Activated naive CD4-positive, alpha-beta T cell treated with anti-CD3 and anti-CD28 coated beads for 36 hours (primary cell): ENCODE measurements at regions of chr14 and their contacts with region 1.

Region 1: GRCh38 chr14:64387694-64388532 is at the start of gene MTHFD1:
- DNase-seq: peak; percentile 99
- H3K4me3 Mint-ChIP-seq: peak within 1 kb of the TSS; percentile 92
- H3K27ac Mint-ChIP-seq: peak within 1 kb of the TSS; percentile 94
- H3K4me1 Mint-ChIP-seq: peaks cover 26% of the 10 kb centered on the region
- H3K27me3 Mint-ChIP-seq: no peaks in the 10 kb centered on the region
- total RNA-seq, gene MTHFD1: 240 to 247 TPM

Region 2: DNA sequence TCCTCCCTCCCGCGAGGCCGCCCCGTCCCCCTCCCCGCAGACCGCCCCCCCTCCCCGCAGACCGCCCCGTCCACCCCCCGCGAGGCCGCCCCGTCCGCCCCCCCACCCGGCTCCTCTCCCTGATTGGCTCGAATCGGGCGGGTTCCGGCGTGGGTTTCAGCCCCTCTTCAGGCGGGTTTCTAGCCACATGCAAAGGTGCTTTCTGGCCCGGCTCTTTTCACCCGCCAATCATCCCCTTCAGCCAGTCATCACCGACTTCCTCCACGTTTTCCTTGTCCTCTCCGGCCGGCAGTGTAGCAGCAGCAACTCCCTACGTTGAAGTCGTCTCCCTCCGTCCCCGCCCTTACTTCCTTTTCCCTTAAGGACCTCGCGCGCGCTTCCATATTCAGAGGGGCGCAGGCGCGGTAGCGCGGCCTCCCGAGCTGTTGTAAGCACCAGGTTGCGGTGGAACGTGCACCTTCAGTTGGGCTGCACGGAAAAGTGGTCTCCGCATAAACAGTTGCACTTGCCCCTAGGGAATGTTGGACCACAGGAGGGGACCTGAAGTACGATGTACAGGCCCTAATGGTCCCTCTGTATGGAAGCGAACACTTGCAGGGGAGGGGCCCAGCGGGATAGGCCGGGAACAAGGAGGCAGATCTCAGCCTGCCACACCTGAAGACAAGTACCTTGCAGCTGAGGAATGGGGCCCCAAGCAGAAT is 49.1 kb before region 1 on chr14:
- CTCF ChIA-PET with region 1: interaction called, 3 read pairs
- intact Hi-C with region 1: loop called (anchors 1 kb)
- DNase-seq: peak; percentile 95
- H3K4me3 Mint-ChIP-seq: peak overlapping the region; percentile 92
- H3K27ac Mint-ChIP-seq: peak overlapping the region; percentile 86
- H3K4me1 Mint-ChIP-seq: peaks cover 19% of the 10 kb centered on the region
- H3K27me3 Mint-ChIP-seq: no peaks in the 10 kb centered on the region

Region 3: DNA sequence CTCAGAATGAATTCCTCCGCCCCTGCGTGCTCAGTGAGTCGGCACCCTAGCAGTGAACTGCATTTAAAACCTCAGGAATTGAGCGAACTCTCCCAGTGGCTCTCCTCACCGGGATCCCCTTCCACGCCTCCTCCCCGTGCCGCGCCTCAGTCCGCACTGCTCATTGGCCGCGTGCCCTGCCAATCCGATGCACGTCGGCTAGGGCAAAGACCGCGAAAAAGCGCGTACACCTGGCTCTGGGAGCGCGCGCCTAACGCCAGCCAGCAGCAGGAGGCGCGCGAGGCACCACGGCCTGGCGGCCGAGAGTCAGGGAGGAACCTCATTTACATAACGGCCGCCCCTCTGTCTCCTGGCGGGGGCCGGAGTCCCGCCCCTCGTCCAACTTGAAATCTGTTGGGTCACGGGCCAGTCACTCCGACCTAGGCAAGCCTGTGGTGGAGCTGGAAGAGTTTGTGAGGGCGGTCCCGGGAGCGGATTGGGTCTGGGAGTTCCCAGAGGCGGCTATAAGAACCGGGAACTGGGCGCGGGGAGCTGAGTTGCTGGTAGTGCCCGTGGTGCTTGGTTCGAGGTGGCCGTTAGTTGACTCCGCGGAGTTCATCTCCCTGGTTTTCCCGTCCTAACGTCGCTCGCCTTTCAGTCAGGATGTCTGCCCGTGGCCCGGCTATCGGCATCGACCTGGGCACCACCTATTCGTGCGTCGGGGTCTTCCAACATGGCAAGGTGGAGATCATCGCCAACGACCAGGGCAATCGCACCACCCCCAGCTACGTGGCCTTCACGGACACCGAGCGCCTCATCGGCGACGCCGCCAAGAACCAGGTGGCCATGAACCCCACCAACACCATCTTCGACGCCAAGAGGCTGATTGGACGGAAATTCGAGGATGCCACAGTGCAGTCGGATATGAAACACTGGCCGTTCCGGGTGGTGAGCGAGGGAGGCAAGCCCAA is 152.6 kb after region 1 on chr14 and contains the start of gene HSPA2:
- CTCF ChIA-PET with region 1: no interaction called
- intact Hi-C with region 1: loop called (anchors 1 kb)
- DNase-seq: peak; percentile 97
- H3K4me3 Mint-ChIP-seq: peak within 1 kb of the TSS; percentile 92
- H3K27ac Mint-ChIP-seq: peak within 1 kb of the TSS; percentile 83
- H3K4me1 Mint-ChIP-seq: peaks cover 30% of the 10 kb centered on the region
- H3K27me3 Mint-ChIP-seq: peaks cover 22% of the 10 kb centered on the region
- total RNA-seq, gene HSPA2: 4.1 to 5.1 TPM